ENCODE measurements at regions of chr5 and their contacts with region 1.

Region 1: GRCh38 chr5:44808435-44809214 is at the start of gene MRPS30:
- DNase-seq: peak; percentile 96
- H3K4me3 Mint-ChIP-seq: peak within 1 kb of the TSS; percentile 96
- H3K27ac Mint-ChIP-seq: peak within 1 kb of the TSS; percentile 95
- H3K4me1 Mint-ChIP-seq: peaks cover 16% of the 10 kb centered on the region
- H3K27me3 Mint-ChIP-seq: peaks cover 1% of the 10 kb centered on the region
- total RNA-seq, gene MRPS30: 46.1 to 49.3 TPM

Region 2: DNA sequence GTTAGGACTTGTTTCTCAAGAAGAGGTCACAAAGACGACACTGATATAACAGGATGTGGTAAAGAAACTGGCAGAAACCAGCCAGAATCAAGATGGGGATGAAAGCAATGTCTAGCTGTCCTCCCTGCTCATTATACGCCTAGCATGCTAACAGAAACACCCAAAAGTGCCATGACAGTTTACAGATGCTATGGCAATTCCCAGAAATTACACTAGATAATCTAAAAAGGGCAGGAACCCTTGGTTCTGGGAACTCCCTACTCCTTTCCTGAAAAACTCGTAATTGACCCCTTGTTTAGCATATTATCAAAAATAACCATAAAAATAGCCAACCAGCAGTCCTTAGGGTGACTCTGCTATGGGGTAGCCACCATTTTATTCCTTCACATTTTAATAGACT is 10.8 kb before region 1 on chr5:
- CTCF ChIA-PET with region 1: no interaction called
- intact Hi-C with region 1: no loop called
- DNase-seq: no peak
- H3K4me3 Mint-ChIP-seq: no peak overlapping the region
- H3K27ac Mint-ChIP-seq: no peak overlapping the region
- H3K4me1 Mint-ChIP-seq: no peaks in the 10 kb centered on the region
- H3K27me3 Mint-ChIP-seq: peaks cover 7% of the 10 kb centered on the region

Region 3: GRCh38 chr5:44821164-44821563 is 12.5 kb after region 1 on chr5:
- CTCF ChIA-PET with region 1: no interaction called
- intact Hi-C with region 1: no loop called
- DNase-seq: no peak
- H3K4me3 Mint-ChIP-seq: no peak overlapping the region
- H3K27ac Mint-ChIP-seq: no peak overlapping the region
- H3K4me1 Mint-ChIP-seq: peaks cover 13% of the 10 kb centered on the region
- H3K27me3 Mint-ChIP-seq: no peaks in the 10 kb centered on the region

Region 4: GRCh38 chr5:44875661-44876605 is 67.3 kb after region 1 on chr5:
- CTCF ChIA-PET with region 1: no interaction called
- intact Hi-C with region 1: loop called (anchors 1 kb)
- DNase-seq: peak; percentile 52
- H3K4me3 Mint-ChIP-seq: no peak overlapping the region
- H3K27ac Mint-ChIP-seq: peak overlapping the region; percentile 84
- H3K4me1 Mint-ChIP-seq: peaks cover 25% of the 10 kb centered on the region
- H3K27me3 Mint-ChIP-seq: no peaks in the 10 kb centered on the region

Measured in activated naive CD4-positive, alpha-beta T cell treated with anti-CD3 and anti-CD28 coated beads for 36 hours (primary cell).